Posterior vena cava (tissue), 2 donors: ENCODE measurements at regions of chr13 and their contacts with region 1.

Region 1: DNA sequence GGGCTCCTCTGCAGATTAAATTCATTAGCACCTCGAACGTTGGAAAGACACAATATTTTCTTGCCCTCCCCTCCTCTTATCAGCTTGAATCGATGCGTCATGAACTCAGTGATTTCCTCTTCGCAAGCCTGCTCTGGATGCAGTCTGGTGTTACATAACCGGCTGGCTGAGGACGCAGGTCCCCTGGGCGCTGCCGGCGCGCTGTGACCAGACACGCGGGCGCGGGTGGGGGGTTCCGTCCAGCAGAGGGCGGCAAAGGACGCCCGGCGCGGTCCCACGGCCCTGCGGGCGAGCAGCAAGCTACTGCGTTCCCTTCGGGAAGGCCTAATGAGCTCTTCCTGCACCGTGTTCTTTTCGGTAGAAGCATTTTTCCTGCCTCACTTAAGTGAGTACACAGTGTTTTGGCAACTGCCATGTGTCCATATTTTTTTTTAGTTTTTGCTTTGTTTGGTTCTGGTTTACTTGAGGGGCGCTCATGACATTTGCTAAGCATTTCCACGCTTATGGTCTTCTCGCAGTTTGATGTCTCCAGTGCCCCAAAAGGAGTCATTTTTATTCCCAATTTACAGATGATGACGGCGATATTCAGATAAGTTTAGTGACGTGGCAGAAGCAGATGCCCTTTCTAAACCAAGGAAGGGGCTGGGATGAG is 112.2 kb upstream of the MBNL2 start:
- DNase-seq: peak; percentile 98

Region 2: GRCh38 chr13:97221989-97222700 is 112.2 kb after region 1 on chr13 and contains the start of gene MBNL2:
- intact Hi-C with region 1: loop called (anchors 2 to 5 kb)
- DNase-seq: peak; percentile 96
- total RNA-seq, gene MBNL2: 106 to 139 TPM

Region 3: GRCh38 chr13:97359181-97360057 is 249.5 kb after region 1 on chr13:
- intact Hi-C with region 1: loop called (anchors 5 kb)
- DNase-seq: no peak

Region 4: GRCh38 chr13:98252931-98253470 is 1143.0 kb after region 1 on chr13:
- intact Hi-C with region 1: loop called in 1 of 2 experiments (anchors 5 kb)
- DNase-seq: no peak

Region 5: GRCh38 chr13:98405107-98405571 is 1295.2 kb after region 1 on chr13:
- intact Hi-C with region 1: no loop called
- DNase-seq: no peak